B cell (primary cell): ENCODE measurements at regions of chr10 and their contacts with region 1.

Region 1: DNA sequence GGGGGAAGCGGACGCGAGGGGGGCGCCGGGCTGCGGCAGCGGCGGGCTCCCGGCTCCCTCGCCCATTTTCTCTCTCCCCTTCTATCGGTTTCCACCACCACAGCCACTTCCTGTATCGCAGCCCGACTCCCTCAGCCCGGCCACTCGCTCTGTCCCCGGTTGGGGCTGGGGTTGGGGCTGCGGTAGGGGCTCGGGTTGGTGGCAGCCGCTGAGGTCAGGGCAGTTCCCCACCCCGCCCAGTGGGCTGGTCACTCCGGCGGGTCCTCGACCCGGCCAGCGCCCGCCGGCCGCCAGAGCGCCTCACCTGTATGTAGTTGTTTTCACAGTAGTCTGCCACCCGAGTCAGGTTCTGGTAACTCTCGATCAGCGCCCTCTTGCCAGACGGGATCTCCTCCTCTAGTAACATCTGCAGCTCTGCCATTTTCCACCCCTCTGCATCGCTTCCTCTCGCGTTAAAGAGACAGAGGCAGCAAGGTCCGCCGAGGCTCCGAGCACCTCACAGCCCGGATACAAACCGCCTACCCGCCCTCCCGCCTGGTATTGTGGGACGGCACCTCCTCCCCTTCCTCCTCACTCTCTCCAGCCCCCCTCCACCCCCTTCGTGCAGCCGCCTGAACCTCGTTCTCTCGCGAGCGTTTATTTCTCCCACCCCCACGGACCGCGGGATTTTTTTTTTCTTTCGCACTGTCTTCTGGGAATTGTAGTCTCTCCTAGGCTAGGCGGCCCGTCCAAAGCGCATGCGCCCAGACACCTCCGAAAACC is at the start of gene ABI1:
- DNase-seq: peak; percentile 100
- ATAC-seq: peak; percentile 90
- H3K4me3 ChIP-seq: peak within 1 kb of the TSS; percentile 89 to 100 (median 99)
- H3K4me3 Mint-ChIP-seq: peak within 1 kb of the TSS; percentile 95
- H3K27ac ChIP-seq: peak within 1 kb of the TSS; percentile 88 to 94
- H3K27ac Mint-ChIP-seq: peak within 1 kb of the TSS; percentile 98
- H3K4me1 ChIP-seq: peaks cover 38% of the 10 kb centered on the region in 2 donors
- H3K4me1 Mint-ChIP-seq: peaks cover 34% of the 10 kb centered on the region
- H3K27me3 ChIP-seq: no peaks in the 10 kb centered on the region
- H3K27me3 Mint-ChIP-seq: no peaks in the 10 kb centered on the region
- CTCF ChIP-seq: no peak
- total RNA-seq, gene ABI1: 78.3 and 80.5 TPM in 2 replicates

Region 2: GRCh38 chr10:26675873-26676257 is 184.8 kb before region 1 on chr10:
- CTCF ChIA-PET with region 1: no interaction called
- POLR2A ChIA-PET with region 1: no interaction called
- intact Hi-C with region 1: no loop called
- DNase-seq: no peak
- ATAC-seq: no peak
- H3K4me3 ChIP-seq: no peak overlapping the region
- H3K4me3 Mint-ChIP-seq: no peak overlapping the region
- H3K27ac ChIP-seq: no peak overlapping the region
- H3K27ac Mint-ChIP-seq: no peak overlapping the region
- H3K4me1 ChIP-seq: no peaks in the 10 kb centered on the region
- H3K4me1 Mint-ChIP-seq: no peaks in the 10 kb centered on the region
- H3K27me3 ChIP-seq: no peaks in the 10 kb centered on the region
- H3K27me3 Mint-ChIP-seq: no peaks in the 10 kb centered on the region
- CTCF ChIP-seq: no peak

Region 3: DNA sequence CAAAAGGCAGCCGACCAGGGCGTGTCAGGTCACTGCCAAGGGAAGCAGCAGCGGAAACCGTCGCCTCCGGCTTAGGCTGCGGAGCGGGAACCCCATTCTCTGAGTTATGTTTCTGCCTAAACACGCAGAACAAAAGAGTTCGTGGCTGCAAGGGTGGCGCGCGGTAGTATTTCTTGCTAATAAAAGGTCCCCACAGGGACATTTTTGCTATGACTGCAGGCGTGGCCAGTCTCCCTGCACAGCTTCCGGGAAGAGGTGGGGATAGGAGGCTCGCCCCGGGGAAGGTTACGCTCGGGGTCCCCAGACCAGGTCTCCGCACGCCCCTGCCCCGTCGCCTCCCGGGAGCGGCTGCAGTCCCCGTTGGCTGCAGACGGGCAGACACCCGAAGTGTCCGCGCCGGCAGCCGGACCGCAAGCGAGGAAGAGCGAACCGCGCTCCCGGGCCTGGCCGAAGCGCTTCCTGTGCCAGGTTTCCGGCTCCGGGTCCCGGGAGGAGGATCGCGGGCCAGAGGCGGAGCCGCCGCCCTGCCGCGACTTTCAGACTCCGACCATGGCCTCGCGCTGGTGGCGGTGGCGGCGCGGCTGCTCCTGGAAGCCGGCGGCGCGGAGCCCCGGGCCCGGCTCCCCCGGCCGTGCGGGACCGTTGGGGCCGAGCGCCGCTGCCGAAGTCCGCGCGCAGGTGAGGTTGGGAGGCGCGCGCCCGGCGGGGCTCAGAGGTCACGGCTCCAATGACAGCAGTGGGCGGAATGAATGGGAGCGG is 163.3 kb before region 1 on chr10 and contains the start of gene PDSS1:
- CTCF ChIA-PET with region 1: interaction called, 3 read pairs
- POLR2A ChIA-PET with region 1: interaction called, 6 read pairs
- intact Hi-C with region 1: loop called (anchors 1 kb)
- DNase-seq: peak; percentile 75
- ATAC-seq: peak; percentile 87
- H3K4me3 ChIP-seq: peak within 1 kb of the TSS; percentile 49 to 95 (median 94)
- H3K4me3 Mint-ChIP-seq: peak within 1 kb of the TSS; percentile 93
- H3K27ac ChIP-seq: peak within 1 kb of the TSS; percentile 64 to 73
- H3K27ac Mint-ChIP-seq: peak within 1 kb of the TSS; percentile 90
- H3K4me1 ChIP-seq: peaks cover 10 to 13% of the 10 kb centered on the region in 2 donors
- H3K4me1 Mint-ChIP-seq: peaks cover 18% of the 10 kb centered on the region
- H3K27me3 ChIP-seq: no peaks in the 10 kb centered on the region
- H3K27me3 Mint-ChIP-seq: no peaks in the 10 kb centered on the region
- CTCF ChIP-seq: no peak
- total RNA-seq, gene PDSS1: 3.6 and 4.3 TPM in 2 replicates

Region 4: GRCh38 chr10:26799342-26799741 is 61.3 kb before region 1 on chr10:
- CTCF ChIA-PET with region 1: interaction called, 4 read pairs
- POLR2A ChIA-PET with region 1: no interaction called
- intact Hi-C with region 1: loop called (anchors 1 kb)
- DNase-seq: peak; percentile 80
- ATAC-seq: peak; percentile 64
- H3K4me3 ChIP-seq: peak overlapping the region in 2 of 5 experiments; percentile 25 to 59
- H3K4me3 Mint-ChIP-seq: peak overlapping the region; percentile 69
- H3K27ac ChIP-seq: peak overlapping the region; percentile 67 to 81
- H3K27ac Mint-ChIP-seq: peak overlapping the region; percentile 72
- H3K4me1 ChIP-seq: peaks cover 70 to 83% of the 10 kb centered on the region in 2 donors
- H3K4me1 Mint-ChIP-seq: peaks cover 81% of the 10 kb centered on the region
- H3K27me3 ChIP-seq: no peaks in the 10 kb centered on the region
- H3K27me3 Mint-ChIP-seq: no peaks in the 10 kb centered on the region
- CTCF ChIP-seq: no peak

Region 5: DNA sequence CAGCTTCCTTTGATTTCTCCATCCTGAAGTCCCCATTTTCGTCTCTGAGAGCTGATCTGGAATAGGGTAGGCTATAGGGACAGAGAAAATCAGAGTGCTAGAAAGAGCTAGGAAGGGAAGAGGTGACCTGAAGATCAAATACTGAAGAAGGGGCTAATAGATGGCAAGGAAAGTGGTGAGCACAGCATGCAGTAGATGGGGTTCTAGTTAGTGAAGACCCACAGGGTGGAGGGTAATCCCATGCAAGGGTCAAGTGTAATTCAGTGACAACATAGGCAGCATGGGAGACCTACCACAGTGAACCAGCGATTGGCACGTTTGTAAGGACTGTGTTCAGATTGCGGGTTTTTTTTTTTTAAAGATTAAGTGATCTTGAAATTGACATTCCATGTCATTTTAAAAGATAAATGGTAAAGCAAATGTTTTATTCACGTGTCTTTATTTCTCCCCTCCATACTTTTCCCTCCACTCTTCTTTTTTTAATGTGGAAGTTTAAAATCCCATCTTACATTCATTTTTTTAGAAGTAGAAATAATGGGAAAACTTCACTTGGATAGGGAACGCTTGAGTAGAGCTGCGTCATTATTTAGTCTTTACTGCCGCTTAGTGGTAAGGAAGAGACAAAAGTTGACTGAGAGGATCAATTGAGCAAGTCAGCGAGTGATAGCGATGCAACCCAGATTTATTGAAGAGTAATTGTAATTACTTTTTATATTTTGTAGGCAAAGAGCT is 21.1 kb after region 1 on chr10:
- CTCF ChIA-PET with region 1: interaction called, 19 read pairs
- POLR2A ChIA-PET with region 1: no interaction called
- intact Hi-C with region 1: loop called (anchors 2 kb)
- DNase-seq: peak; percentile 65
- ATAC-seq: peak; percentile 70
- H3K4me3 ChIP-seq: no peak overlapping the region
- H3K4me3 Mint-ChIP-seq: no peak overlapping the region
- H3K27ac ChIP-seq: no peak overlapping the region
- H3K27ac Mint-ChIP-seq: no peak overlapping the region
- H3K4me1 ChIP-seq: no peaks in the 10 kb centered on the region
- H3K4me1 Mint-ChIP-seq: peaks cover 1% of the 10 kb centered on the region
- H3K27me3 ChIP-seq: peaks cover 0 to 3% (median 1%) of the 10 kb centered on the region in 4 experiments
- H3K27me3 Mint-ChIP-seq: peaks cover 22% of the 10 kb centered on the region
- CTCF ChIP-seq: peak; percentile 80

Region 6: GRCh38 chr10:27155066-27155754 is 294.6 kb after region 1 on chr10 and contains the start of gene MASTL:
- CTCF ChIA-PET with region 1: no interaction called
- POLR2A ChIA-PET with region 1: interaction called, 4 read pairs
- intact Hi-C with region 1: loop called (anchors 1 kb)
- DNase-seq: peak; percentile 98
- ATAC-seq: peak; percentile 86
- H3K4me3 ChIP-seq: peak within 1 kb of the TSS; percentile 73 to 99 (median 95)
- H3K4me3 Mint-ChIP-seq: peak within 1 kb of the TSS; percentile 96
- H3K27ac ChIP-seq: peak within 1 kb of the TSS; percentile 97
- H3K27ac Mint-ChIP-seq: peak within 1 kb of the TSS; percentile 100
- H3K4me1 ChIP-seq: peaks cover 20 to 29% of the 10 kb centered on the region in 2 donors
- H3K4me1 Mint-ChIP-seq: peaks cover 48% of the 10 kb centered on the region
- H3K27me3 ChIP-seq: no peaks in the 10 kb centered on the region
- H3K27me3 Mint-ChIP-seq: no peaks in the 10 kb centered on the region
- CTCF ChIP-seq: no peak
- total RNA-seq, gene MASTL: 12.4 and 13.6 TPM in 2 replicates

Region 7: DNA sequence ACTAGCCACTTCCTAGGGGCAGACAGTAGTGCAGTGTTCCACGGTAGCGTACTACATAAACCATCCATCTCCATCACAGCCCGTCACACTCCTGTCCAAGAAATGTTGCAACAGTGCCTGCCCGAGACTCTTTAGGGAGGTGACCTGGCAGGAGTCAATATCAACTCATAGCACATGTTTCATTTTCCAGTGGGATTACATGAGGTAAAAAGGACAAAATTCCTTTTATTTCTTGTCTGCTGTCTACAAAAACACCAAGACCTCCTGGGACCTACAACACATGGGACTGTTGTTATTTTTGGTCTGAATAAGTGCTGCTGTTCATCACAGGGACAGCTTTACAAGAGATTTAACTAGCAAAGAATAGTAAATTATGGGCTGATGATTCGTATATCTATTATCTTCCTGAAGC is 1342.3 kb after region 1 on chr10:
- CTCF ChIA-PET with region 1: no interaction called
- POLR2A ChIA-PET with region 1: no interaction called
- intact Hi-C with region 1: no loop called
- DNase-seq: no peak
- ATAC-seq: no peak
- H3K4me3 ChIP-seq: no peak overlapping the region
- H3K4me3 Mint-ChIP-seq: no peak overlapping the region
- H3K27ac ChIP-seq: no peak overlapping the region
- H3K27ac Mint-ChIP-seq: no peak overlapping the region
- H3K4me1 ChIP-seq: no peaks in the 10 kb centered on the region
- H3K4me1 Mint-ChIP-seq: no peaks in the 10 kb centered on the region
- H3K27me3 ChIP-seq: no peaks in the 10 kb centered on the region
- H3K27me3 Mint-ChIP-seq: no peaks in the 10 kb centered on the region
- CTCF ChIP-seq: no peak